ENCODE measurements at regions of chr6 and their contacts with region 1.

Region 1: DNA sequence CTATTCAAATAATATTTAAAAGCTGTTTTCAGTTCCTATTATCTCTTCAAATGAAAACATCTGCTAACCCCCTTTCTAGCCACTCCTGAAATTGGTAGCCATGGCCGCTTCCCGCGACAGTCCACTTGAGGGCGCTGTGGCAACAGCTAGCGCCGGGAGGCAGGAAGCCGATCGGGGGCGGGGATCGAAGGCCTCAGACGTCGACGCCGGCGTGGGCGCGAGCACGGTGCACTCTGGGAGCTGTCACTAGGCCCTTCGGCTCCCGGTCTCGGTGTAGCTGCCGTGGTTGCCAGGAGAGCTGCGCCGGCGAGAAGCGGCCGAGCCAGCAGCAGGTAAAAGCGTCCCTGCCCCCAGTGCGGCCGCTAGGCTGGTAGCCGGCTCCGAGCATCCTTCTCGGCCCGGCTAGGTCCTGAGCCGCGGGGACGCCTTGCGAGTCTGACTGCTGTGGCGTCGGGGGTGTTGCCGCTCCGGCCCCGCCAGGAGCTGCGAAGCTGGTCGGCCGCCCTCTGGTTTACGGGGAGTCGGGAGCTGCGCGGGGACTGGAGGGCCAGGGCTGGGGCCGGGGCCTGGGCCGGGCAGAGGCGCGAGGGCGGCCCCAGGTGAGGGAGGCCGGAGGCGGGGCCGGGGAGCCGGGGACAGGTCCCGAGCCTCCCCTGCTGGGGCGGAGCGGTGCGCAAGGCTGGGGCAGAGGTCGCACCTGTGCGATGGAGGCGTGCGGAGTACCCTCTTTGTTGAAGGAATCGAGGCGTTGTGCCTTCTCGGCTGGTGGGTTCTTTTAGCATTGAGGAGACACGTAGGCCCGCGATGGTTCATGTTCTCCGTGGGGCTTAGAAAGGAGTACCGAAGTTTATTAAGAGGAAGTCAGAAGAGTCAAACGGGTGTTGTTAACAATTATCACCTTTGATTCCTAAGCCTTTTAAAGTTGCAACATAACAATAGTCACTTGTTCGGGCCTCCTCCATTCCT is at the start of gene DOP1A:
- DNase-seq: peak; percentile 98
- total RNA-seq, gene DOP1A: 23.8 TPM

Region 2: GRCh38 chr6:83192871-83193746 is 125.4 kb after region 1 on chr6 and contains the starts of genes PGM3 and RWDD2A:
- intact Hi-C with region 1: loop called (anchors 5 kb)
- DNase-seq: peak; percentile 95
- total RNA-seq, gene PGM3: 23.8 TPM
- total RNA-seq, gene RWDD2A: 3.2 TPM

Region 3: GRCh38 chr6:83215131-83216047 is 147.7 kb after region 1 on chr6:
- intact Hi-C with region 1: loop called (anchors 1 kb)
- DNase-seq: no peak

Region 4: DNA sequence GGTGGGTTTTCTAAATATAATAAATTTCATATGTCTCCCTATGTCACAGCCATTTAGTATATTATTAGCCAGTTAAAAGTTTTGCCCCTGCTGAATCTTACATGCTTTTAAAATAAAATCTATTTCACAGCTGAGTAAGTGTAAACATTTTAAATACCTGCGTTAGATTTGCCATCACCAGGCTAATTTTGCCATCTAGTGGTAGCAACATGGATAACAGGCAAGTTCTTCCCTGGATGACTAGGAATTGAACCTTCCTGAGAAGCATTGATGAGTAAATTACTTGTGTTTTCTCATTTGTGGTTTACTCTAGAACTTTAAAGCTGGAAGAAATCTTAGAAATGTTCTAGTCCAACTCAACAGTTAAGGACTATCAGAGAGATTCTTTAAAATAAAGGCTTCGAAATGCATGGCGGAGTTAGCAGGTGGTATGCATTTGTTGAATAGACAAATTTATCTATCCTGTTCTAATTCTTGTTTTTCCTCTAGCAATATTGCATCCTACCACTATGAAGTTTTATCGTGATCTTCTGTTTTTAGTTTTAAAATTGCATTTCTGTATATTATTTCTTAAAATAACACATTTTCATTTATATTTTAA is 447.2 kb after region 1 on chr6:
- intact Hi-C with region 1: loop called (anchors 5 kb)
- DNase-seq: no peak